H1 (cell line): ENCODE measurements at regions of chr2 and their contacts with region 1.

Region 1: DNA sequence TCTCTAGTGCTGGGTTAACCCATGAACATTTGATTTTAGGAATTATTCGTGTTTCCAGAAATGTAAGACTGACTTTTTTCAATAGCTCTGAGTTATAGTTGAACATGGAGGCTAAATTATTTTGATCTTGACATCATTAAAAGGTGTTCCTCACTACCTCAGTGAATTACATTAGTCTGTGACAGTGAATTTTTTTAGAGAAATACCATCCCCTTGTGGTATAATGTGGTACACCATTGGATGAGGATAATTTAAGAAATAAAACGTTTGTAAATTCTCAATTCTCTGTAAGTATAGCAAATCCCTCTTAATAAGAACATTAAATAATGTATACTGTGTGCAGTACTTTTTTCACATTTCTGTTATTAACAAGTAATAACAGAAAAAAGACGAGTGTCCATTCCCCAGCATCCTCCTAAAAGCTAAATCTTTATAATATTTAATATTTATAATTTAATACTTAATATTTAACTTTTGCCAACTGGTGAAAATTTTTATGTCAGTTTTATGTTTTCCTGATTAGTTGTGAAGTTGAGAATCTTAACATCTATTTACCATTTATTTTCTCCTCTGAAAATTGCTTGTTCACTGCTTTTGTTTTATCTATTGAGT is 70.3 kb upstream of the CWC22 start:
- DNase-seq: no peak
- H3K4me3 ChIP-seq: no peak overlapping the region
- H3K27ac ChIP-seq: no peak overlapping the region
- H3K4me1 ChIP-seq: peaks cover 0 to 2% (median under 1%) of the 10 kb centered on the region in 4 experiments; a peak in 2 of 7 replicates
- H3K27me3 ChIP-seq: no peaks in the 10 kb centered on the region
- CTCF ChIP-seq: peak in 2 of 3 experiments; percentile 47 to 67; a peak in 2 of 4 replicates
- EP300 ChIP-seq: no peak
- POLR2A ChIP-seq: no peak
- RAD21 ChIP-seq: peak; percentile 73 to 89

Region 2: DNA sequence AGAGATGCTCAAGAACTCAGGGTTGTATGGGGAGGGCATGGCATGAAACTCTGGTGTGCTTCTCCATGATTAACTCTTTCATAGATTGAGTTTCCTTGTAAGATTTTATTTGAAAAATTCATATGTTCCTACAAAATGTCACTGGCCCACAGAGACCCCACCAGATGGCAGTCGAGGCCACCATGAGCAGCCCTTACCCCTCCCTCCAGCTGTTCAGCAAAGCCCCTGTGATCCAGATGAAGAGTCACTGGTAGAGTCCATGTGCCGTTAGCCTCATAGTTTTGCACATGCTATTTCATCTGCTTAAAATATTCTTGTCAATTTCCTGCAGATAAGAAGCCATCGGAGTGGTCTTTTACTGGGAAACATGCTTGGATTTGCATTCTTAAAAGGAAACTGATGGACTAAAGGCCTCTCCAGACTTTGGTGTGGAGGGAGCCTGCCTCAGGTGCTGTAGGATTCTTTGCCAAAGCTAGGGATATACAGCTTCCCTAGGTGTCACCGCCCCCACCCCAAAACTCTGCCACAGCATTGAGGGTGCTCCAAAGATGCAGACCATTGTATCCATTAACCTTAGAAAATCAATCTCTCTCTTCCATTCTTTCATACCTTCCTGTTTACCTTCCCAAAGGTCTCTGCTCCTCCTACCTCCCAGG is 234.8 kb before region 1 on chr2:
- CTCF ChIA-PET with region 1: interaction called, 41 read pairs
- POLR2A ChIA-PET with region 1: no interaction called
- DNase-seq: peak in 1 of 2 experiments; percentile 53
- H3K4me3 ChIP-seq: no peak overlapping the region
- H3K27ac ChIP-seq: no peak overlapping the region
- H3K4me1 ChIP-seq: peaks cover 0 to 3% (median 1%) of the 10 kb centered on the region in 4 experiments; a peak in 3 of 7 replicates
- H3K27me3 ChIP-seq: no peaks in the 10 kb centered on the region
- CTCF ChIP-seq: peak; percentile 59 to 74 (median 62)
- EP300 ChIP-seq: no peak
- POLR2A ChIP-seq: no peak
- RAD21 ChIP-seq: peak; percentile 84 to 85

Region 3: GRCh38 chr2:179985163-179985820 is 92.1 kb before region 1 on chr2:
- CTCF ChIA-PET with region 1: interaction called, 21 read pairs
- POLR2A ChIA-PET with region 1: no interaction called
- DNase-seq: no peak
- H3K4me3 ChIP-seq: no peak overlapping the region
- H3K27ac ChIP-seq: no peak overlapping the region
- H3K4me1 ChIP-seq: peaks cover 0 to 4% (median 3%) of the 10 kb centered on the region in 4 experiments; a peak in 2 of 7 replicates
- H3K27me3 ChIP-seq: no peaks in the 10 kb centered on the region
- CTCF ChIP-seq: no peak
- EP300 ChIP-seq: no peak
- POLR2A ChIP-seq: no peak
- RAD21 ChIP-seq: no peak

Region 4: DNA sequence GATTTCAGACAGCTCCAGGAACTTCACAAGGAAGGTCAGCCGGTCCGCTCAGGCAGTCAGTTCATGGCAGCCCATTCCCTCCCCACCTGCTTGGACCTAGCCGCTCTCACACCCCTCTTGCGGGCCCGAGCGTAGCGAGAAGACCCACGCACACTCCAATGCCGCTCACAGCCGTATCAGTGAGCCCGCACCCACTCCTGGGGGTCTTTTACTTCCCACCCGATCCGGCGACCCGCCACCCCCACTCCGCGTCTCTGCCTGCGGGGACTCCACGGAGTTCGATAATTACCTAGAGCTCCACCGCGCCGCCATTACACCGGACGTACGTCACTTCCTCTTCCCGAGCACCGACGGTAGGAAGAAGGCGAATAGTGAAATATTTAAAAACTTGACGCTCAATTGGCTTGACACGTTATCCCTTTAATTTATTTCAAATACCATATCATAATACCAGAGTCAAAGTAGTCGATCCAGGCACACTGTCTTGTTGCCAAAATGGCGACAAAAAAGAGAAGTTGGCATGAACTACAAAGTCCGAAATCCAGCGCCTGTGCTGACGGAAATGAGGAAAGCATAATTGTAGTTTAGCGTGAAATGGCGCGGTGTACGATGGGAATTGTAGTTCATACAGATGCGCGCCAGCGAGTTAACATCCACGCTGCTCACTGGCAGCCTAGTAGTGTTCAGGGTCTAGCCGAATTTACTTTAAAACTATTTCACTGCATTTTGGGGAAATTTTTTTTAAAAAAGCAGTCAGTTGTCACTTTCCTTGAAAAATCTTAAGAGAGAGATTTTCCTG is 70.4 kb before region 1 on chr2 and contains the start of gene CWC22:
- CTCF ChIA-PET with region 1: interaction called, 12 read pairs
- POLR2A ChIA-PET with region 1: no interaction called
- DNase-seq: peak in 1 of 2 experiments; percentile 81
- H3K4me3 ChIP-seq: peak within 1 kb of the TSS; percentile 57 to 99 (median 95)
- H3K27ac ChIP-seq: peak within 1 kb of the TSS; percentile 97
- H3K4me1 ChIP-seq: peaks cover 0 to 4% (median 2%) of the 10 kb centered on the region in 4 experiments; a peak in 3 of 7 replicates
- H3K27me3 ChIP-seq: no peaks in the 10 kb centered on the region
- CTCF ChIP-seq: no peak
- EP300 ChIP-seq: no peak
- POLR2A ChIP-seq: peak in 1 of 2 experiments; percentile 86; a peak in 2 of 3 replicates
- RAD21 ChIP-seq: no peak
- total RNA-seq, gene CWC22: 30.2 and 34.0 TPM in 2 replicates

Region 5: GRCh38 chr2:180021850-180022249 is 55.6 kb before region 1 on chr2:
- CTCF ChIA-PET with region 1: no interaction called
- POLR2A ChIA-PET with region 1: no interaction called
- DNase-seq: no peak
- H3K4me3 ChIP-seq: no peak overlapping the region
- H3K27ac ChIP-seq: no peak overlapping the region
- H3K4me1 ChIP-seq: no peaks in the 10 kb centered on the region
- H3K27me3 ChIP-seq: no peaks in the 10 kb centered on the region
- CTCF ChIP-seq: no peak
- EP300 ChIP-seq: no peak
- POLR2A ChIP-seq: no peak
- RAD21 ChIP-seq: no peak

Region 6: GRCh38 chr2:180063494-180064092 is 13.8 kb before region 1 on chr2:
- CTCF ChIA-PET with region 1: interaction called, 24 read pairs
- POLR2A ChIA-PET with region 1: interaction called, 16 read pairs
- DNase-seq: no peak
- H3K4me3 ChIP-seq: no peak overlapping the region
- H3K27ac ChIP-seq: no peak overlapping the region
- H3K4me1 ChIP-seq: peaks cover under 1 to 5% (median 2%) of the 10 kb centered on the region in 4 experiments
- H3K27me3 ChIP-seq: no peaks in the 10 kb centered on the region
- CTCF ChIP-seq: no peak
- EP300 ChIP-seq: no peak
- POLR2A ChIP-seq: no peak
- RAD21 ChIP-seq: no peak

Region 7: DNA sequence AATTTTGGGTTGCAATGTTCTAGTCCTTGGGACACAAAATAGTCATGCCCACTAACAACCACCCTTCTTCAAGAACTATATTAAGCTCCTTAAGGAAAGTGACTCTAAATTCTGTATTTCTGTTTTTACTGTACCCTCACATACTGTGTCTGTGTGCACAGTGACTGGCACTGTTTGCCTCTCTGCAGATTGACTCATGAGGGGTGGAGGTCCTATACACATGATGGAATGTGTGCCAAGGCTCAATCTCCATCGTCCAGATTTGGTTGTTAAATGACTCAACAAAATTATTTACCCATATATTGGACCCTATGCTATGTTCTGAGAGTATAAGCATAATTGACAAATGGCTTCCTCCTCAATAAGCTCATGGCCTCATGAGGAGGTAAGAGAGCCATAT is 56.3 kb after region 1 on chr2:
- CTCF ChIA-PET with region 1: no interaction called
- POLR2A ChIA-PET with region 1: no interaction called
- DNase-seq: no peak
- H3K4me3 ChIP-seq: no peak overlapping the region
- H3K27ac ChIP-seq: no peak overlapping the region
- H3K4me1 ChIP-seq: no peaks in the 10 kb centered on the region; a peak in 1 of 7 replicates
- H3K27me3 ChIP-seq: no peaks in the 10 kb centered on the region
- CTCF ChIP-seq: no peak
- EP300 ChIP-seq: no peak
- POLR2A ChIP-seq: no peak
- RAD21 ChIP-seq: no peak

Region 8: DNA sequence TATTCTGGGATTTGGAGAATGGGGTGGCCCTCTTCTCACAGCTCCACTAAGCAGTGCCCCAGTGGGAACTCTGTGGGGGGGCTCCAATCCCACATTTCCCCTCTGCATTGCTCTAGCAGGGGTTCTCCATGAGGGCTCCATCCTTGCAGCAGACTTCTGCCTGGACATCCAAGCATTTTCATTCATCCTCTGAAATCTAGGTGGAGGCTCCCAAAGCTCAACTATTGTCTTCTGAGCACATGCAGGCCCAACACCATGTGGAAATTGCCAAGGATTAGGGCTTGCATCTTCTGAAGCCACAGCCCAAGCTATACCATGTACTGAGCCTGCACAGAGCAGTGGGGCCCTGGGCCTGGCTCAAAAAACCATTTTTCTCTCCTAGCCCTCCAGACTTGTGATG is 92.1 kb after region 1 on chr2:
- CTCF ChIA-PET with region 1: no interaction called
- POLR2A ChIA-PET with region 1: no interaction called
- DNase-seq: no peak
- H3K4me3 ChIP-seq: no peak overlapping the region
- H3K27ac ChIP-seq: no peak overlapping the region
- H3K4me1 ChIP-seq: no peaks in the 10 kb centered on the region
- H3K27me3 ChIP-seq: no peaks in the 10 kb centered on the region
- CTCF ChIP-seq: no peak
- EP300 ChIP-seq: no peak
- POLR2A ChIP-seq: no peak
- RAD21 ChIP-seq: no peak